T-cell (primary cell): ENCODE measurements at regions of chr22 and their contacts with region 1.

Region 1: GRCh38 chr22:42895087-42895486 is 38.0 kb upstream of the ARFGAP3 start:
- DNase-seq: peak in 18 of 35 experiments; percentile 10 to 65 (median 20)
- ATAC-seq: peak; percentile 31 to 82 (median 48)
- H3K4me3 ChIP-seq: no peak overlapping the region
- H3K4me3 Mint-ChIP-seq: peak overlapping the region in 1 of 3 donors; percentile 26
- H3K27ac ChIP-seq: peak overlapping the region; percentile 60
- H3K27ac Mint-ChIP-seq: peak overlapping the region; percentile 69 to 80
- H3K4me1 ChIP-seq: peaks cover 15 to 72% of the 10 kb centered on the region in 2 experiments
- H3K4me1 Mint-ChIP-seq: peaks cover 34 to 51% (median 38%) of the 10 kb centered on the region in 3 donors
- H3K27me3 ChIP-seq: no peaks in the 10 kb centered on the region
- H3K27me3 Mint-ChIP-seq: no peaks in the 10 kb centered on the region

Region 2: DNA sequence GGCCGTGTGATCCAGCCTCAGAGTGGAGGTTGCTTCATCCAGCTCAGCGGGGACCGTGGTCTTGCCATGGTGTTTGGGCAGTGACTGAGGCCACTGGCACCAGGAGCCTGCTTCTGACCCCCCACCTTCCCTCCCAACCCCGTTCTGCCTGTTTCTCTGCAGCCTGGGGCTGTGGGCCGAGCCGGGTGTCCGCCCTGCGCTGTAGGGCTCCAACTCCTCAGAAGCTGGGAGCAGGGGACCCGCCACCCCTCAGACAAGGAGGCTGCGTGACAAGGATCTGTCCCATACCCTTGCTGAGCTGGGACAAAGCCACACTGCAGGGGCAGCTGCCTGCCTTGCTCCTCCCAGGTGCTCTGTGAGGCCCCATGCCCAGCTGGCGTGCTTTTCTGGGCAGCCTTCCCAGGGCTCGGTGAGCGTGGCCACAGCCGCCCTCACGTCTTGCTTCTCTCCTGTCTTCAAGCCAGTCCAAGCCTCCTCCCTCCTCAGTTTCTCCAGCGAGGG is 26.3 kb before region 1 on chr22:
- CTCF ChIA-PET with region 1: interaction called in 1 of 2 experiments, 10 read pairs
- POLR2A ChIA-PET with region 1: no interaction called
- DNase-seq: no peak
- ATAC-seq: no peak
- H3K4me3 ChIP-seq: no peak overlapping the region
- H3K4me3 Mint-ChIP-seq: no peak overlapping the region
- H3K27ac ChIP-seq: no peak overlapping the region
- H3K27ac Mint-ChIP-seq: no peak overlapping the region
- H3K4me1 ChIP-seq: no peaks in the 10 kb centered on the region
- H3K4me1 Mint-ChIP-seq: peaks cover 0 to 5% (median 3%) of the 10 kb centered on the region in 3 donors
- H3K27me3 ChIP-seq: no peaks in the 10 kb centered on the region
- H3K27me3 Mint-ChIP-seq: no peaks in the 10 kb centered on the region